ENCODE measurements at regions of chr17 and their contacts with region 1.

Region 1: GRCh38 chr17:56085588-56086267 is 67.5 kb upstream of the ANKFN1 start:
- DNase-seq: no peak
- ATAC-seq: no peak
- H3K4me3 ChIP-seq: no peak overlapping the region
- H3K27ac ChIP-seq: no peak overlapping the region
- H3K4me1 ChIP-seq: no peaks in the 10 kb centered on the region
- H3K27me3 ChIP-seq: no peaks in the 10 kb centered on the region
- CTCF ChIP-seq: no peak

Region 2: GRCh38 chr17:55983096-55983495 is 102.6 kb before region 1 on chr17:
- intact Hi-C with region 1: no loop called
- DNase-seq: no peak
- ATAC-seq: no peak
- H3K4me3 ChIP-seq: no peak overlapping the region
- H3K27ac ChIP-seq: no peak overlapping the region
- H3K4me1 ChIP-seq: no peaks in the 10 kb centered on the region
- H3K27me3 ChIP-seq: no peaks in the 10 kb centered on the region
- CTCF ChIP-seq: no peak

Region 3: DNA sequence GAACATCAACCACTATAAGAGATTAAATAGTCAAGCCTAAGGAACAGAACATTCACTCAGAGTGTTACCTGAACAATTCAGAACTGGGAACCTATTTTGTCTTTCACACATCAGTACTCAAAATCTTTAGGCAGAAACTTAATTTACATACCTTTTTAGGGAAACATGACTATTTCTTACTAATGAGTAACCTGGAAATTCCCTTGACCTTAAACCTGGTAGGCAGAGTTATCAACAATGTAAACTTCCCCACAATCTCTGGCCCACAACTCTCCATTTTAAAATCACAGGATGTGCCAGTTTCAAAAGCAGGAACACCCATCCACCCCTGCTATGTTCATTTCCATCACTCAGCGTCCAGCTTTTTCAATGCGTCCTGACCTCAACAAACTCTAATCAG is 65.4 kb before region 1 on chr17:
- intact Hi-C with region 1: loop called in 1 of 2 experiments (anchors 10 kb)
- DNase-seq: no peak
- ATAC-seq: no peak
- H3K4me3 ChIP-seq: no peak overlapping the region
- H3K27ac ChIP-seq: no peak overlapping the region
- H3K4me1 ChIP-seq: no peaks in the 10 kb centered on the region
- H3K27me3 ChIP-seq: no peaks in the 10 kb centered on the region
- CTCF ChIP-seq: no peak

Region 4: DNA sequence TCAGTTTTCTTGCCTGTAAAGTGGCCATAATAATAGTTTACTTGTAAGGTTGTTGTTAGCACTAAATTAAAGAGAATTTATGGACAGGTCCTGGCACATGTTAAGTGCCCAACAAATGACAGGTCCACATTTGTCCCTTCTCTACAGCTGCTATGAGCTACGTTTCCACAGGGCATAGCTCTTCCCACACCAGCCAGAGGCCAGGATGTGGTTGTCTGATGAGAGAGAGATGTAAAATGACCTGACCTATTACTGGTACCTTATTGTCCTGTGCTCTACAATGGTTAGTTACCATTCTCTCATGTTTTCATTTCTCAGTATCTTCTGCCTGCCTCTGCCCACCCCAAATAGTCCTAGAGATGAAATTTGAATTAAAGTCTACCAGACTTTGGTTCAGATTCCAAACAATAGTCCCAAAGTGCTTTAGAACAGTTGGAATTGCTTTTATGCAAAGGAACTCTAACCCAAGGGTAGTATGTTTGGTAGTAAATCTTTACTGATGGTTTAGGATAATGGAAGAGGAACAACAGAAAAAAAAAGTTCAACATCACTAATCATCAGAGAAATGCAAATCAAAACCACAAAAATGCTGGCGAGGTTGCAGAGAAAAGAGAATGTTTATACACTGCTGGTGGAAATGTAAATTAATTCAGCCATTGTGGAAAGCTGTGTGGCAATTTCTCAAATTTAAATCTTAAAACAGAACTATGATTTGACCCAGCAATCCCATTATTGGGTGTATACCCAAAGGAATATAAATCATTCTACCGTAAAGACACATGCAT is 10.5 kb after region 1 on chr17:
- intact Hi-C with region 1: loop called in 1 of 2 experiments (anchors 2 kb)
- DNase-seq: no peak
- ATAC-seq: no peak
- H3K4me3 ChIP-seq: no peak overlapping the region
- H3K27ac ChIP-seq: no peak overlapping the region
- H3K4me1 ChIP-seq: no peaks in the 10 kb centered on the region
- H3K27me3 ChIP-seq: no peaks in the 10 kb centered on the region
- CTCF ChIP-seq: no peak